ENCODE measurements at regions of chr18 and their contacts with region 1.

Region 1: GRCh38 chr18:42114310-42114943 is 159.4 kb downstream of the PIK3C3 start:
- DNase-seq: peak; percentile 49 to 53 (median 51)
- H3K4me3 ChIP-seq: no peak overlapping the region
- H3K4me3 Mint-ChIP-seq: peak overlapping the region in 5 of 8 donors; percentile 11 to 59 (median 34)
- H3K27ac ChIP-seq: no peak overlapping the region
- H3K27ac Mint-ChIP-seq: peak overlapping the region in 1 of 7 donors; percentile 43
- H3K4me1 ChIP-seq: peaks cover 10% of the 10 kb centered on the region
- H3K4me1 Mint-ChIP-seq: peaks cover 7 to 14% (median 11%) of the 10 kb centered on the region in 4 donors
- H3K27me3 ChIP-seq: no peaks in the 10 kb centered on the region
- H3K27me3 Mint-ChIP-seq: peaks cover 0 to 5% of the 10 kb centered on the region in 2 donors

Region 2: GRCh38 chr18:42100248-42100647 is 14.2 kb before region 1 on chr18:
- CTCF ChIA-PET with region 1: interaction called, 14 read pairs
- POLR2A ChIA-PET with region 1: no interaction called
- intact Hi-C with region 1: no loop called
- DNase-seq: no peak
- H3K4me3 ChIP-seq: no peak overlapping the region
- H3K4me3 Mint-ChIP-seq: no peak overlapping the region
- H3K27ac ChIP-seq: no peak overlapping the region
- H3K27ac Mint-ChIP-seq: no peak overlapping the region
- H3K4me1 ChIP-seq: no peaks in the 10 kb centered on the region
- H3K4me1 Mint-ChIP-seq: no peaks in the 10 kb centered on the region
- H3K27me3 ChIP-seq: no peaks in the 10 kb centered on the region
- H3K27me3 Mint-ChIP-seq: no peaks in the 10 kb centered on the region

Region 3: GRCh38 chr18:42131066-42131929 is 16.9 kb after region 1 on chr18:
- CTCF ChIA-PET with region 1: interaction called, 41 read pairs
- POLR2A ChIA-PET with region 1: no interaction called
- intact Hi-C with region 1: no loop called
- DNase-seq: no peak
- H3K4me3 ChIP-seq: no peak overlapping the region
- H3K4me3 Mint-ChIP-seq: no peak overlapping the region
- H3K27ac ChIP-seq: no peak overlapping the region
- H3K27ac Mint-ChIP-seq: no peak overlapping the region
- H3K4me1 ChIP-seq: no peaks in the 10 kb centered on the region
- H3K4me1 Mint-ChIP-seq: no peaks in the 10 kb centered on the region
- H3K27me3 ChIP-seq: no peaks in the 10 kb centered on the region
- H3K27me3 Mint-ChIP-seq: no peaks in the 10 kb centered on the region

Region 4: DNA sequence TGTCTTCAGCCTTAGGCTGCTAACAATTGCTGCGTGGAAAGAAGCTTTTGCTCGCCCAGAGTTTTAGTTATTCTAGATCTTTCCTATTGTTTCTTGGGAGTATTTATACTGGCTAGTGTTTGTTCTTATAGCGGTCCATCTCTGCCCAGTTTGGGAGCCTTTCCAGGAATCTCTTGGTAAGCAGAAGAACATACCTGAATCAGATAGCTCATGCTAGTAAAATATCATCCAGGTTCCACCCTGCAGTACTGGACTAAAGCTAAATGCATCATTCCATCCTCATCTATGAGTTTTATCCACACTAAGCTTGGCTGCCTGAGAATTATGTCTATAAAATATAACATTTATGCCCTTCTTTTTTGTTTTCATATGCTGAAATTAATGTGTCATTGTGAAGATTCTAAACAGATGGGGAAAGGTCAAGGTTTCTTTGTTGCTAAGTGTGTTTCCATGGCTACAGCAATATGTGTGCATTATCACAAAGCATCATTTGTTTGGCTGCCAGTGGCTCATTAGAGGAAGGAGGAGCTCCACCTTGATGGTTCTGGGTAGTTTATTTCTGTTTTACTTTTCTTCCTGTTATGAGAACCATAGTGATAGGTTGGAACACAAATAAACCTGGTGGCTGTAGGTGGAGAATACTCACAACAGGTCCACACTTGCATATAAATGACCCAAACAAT is 23.4 kb after region 1 on chr18:
- CTCF ChIA-PET with region 1: interaction called, 15 read pairs
- POLR2A ChIA-PET with region 1: no interaction called
- intact Hi-C with region 1: no loop called
- DNase-seq: no peak
- H3K4me3 ChIP-seq: no peak overlapping the region
- H3K4me3 Mint-ChIP-seq: no peak overlapping the region
- H3K27ac ChIP-seq: no peak overlapping the region
- H3K27ac Mint-ChIP-seq: no peak overlapping the region
- H3K4me1 ChIP-seq: no peaks in the 10 kb centered on the region
- H3K4me1 Mint-ChIP-seq: no peaks in the 10 kb centered on the region
- H3K27me3 ChIP-seq: no peaks in the 10 kb centered on the region
- H3K27me3 Mint-ChIP-seq: peaks cover 0 to 4% of the 10 kb centered on the region in 2 donors

Region 5: DNA sequence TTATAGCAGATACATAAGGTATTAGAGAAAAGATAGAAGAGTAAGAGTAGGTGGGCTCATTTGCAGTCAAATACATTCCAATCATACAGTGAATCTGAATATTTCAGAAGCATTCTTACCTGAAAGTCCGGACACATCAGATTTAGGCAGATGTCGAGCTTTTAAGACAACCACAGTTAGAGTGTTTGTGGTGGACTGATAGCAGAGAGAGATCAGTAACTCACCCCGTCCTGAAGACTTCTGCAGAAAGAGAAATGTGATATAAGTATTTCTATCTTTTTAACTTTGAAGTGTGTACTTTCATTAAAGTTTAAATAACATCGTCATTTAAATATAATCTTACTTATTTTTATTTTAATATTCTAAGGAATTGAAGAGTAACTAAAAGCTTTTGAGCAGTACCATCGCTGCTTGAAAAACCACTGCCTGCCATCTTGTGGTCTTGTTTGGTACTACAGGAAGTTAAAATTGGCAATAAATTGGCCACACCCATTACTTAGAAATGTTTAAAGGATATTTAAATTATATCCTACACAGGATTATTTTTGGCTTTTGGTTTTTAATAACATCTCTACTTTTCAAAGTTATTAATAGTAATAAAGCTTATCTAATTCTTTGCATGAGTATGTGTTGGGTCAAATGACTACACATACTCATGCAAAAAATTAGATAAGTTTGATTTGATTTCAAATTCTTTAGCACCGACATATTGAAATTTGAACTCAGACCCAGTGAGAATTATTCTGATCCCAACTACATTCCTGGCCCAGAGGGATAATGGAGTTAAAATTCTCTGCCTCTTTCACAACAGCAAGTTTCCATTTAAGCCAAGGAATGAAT is 1157.4 kb after region 1 on chr18:
- CTCF ChIA-PET with region 1: interaction called, 26 read pairs
- POLR2A ChIA-PET with region 1: no interaction called
- intact Hi-C with region 1: no loop called
- DNase-seq: peak in 3 of 5 donors; percentile 9 to 20 (median 14)
- H3K4me3 ChIP-seq: no peak overlapping the region
- H3K4me3 Mint-ChIP-seq: no peak overlapping the region
- H3K27ac ChIP-seq: no peak overlapping the region
- H3K27ac Mint-ChIP-seq: no peak overlapping the region
- H3K4me1 ChIP-seq: no peaks in the 10 kb centered on the region
- H3K4me1 Mint-ChIP-seq: peaks cover 0 to 2% (median under 1%) of the 10 kb centered on the region in 4 donors
- H3K27me3 ChIP-seq: no peaks in the 10 kb centered on the region
- H3K27me3 Mint-ChIP-seq: peaks cover 0 to 2% of the 10 kb centered on the region in 2 donors